Activated B cell treated with CpG ODN at 0.5 μM for 24 hours (primary cell): ENCODE measurements at regions of chr12 and their contacts with region 1.

Region 1: GRCh38 chr12:42482445-42483237 is 106.9 kb downstream of the PRICKLE1 start:
- DNase-seq: peak; percentile 89
- ATAC-seq: peak; percentile 76
- H3K4me3 Mint-ChIP-seq: peak overlapping the region; percentile 94
- H3K27ac Mint-ChIP-seq: peak overlapping the region; percentile 86
- H3K4me1 Mint-ChIP-seq: peaks cover 58% of the 10 kb centered on the region
- H3K27me3 Mint-ChIP-seq: no peaks in the 10 kb centered on the region
- CTCF ChIP-seq: no peak

Region 2: DNA sequence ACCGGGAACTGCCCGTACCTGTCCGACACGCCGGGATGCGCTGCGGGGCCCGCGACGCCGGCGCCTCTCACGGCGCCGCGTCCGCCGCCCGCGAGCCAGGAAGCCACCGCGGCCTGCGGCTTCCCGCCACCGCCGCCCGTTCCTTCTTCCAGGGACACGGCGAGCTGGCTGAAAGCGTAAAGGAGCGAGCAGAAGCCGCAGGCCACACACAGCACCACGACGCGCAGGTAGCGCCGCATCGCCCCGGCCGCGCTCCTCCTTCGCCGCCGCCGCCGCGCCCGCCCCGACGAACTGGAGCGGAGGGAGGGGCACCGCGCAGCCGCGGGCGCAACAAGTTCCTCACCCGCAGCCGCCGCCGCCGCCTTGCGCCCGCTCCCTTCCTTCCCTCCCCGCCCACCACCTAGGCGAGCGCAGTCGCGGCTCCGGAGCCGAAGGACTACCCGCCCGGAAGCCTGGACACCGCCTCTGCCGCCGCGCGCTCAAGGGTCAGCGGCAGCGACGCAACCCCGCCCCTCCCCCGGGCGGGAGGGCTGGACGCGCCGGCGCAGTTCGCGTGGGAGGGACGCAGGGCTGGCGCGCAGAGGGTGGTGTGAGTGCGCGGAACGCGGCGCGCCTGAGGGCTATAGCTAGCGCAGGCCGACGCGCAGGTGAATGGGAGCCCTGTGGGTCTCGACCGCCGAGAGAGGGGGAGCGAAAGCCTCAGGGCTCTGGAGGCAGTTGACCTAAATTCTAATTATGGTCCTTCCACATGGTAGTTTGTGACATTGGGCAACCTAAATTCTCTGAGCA is 338.0 kb before region 1 on chr12 and contains the start of gene GXYLT1:
- CTCF ChIA-PET with region 1: no interaction called
- POLR2A ChIA-PET with region 1: no interaction called
- intact Hi-C with region 1: loop called (anchors 5 kb)
- DNase-seq: peak; percentile 87
- ATAC-seq: peak; percentile 94
- H3K4me3 Mint-ChIP-seq: peak within 1 kb of the TSS; percentile 95
- H3K27ac Mint-ChIP-seq: peak within 1 kb of the TSS; percentile 83
- H3K4me1 Mint-ChIP-seq: peaks cover 40% of the 10 kb centered on the region
- H3K27me3 Mint-ChIP-seq: no peaks in the 10 kb centered on the region
- CTCF ChIP-seq: no peak
- total RNA-seq, gene GXYLT1: 6.9 and 7.9 TPM in 2 replicates

Region 3: DNA sequence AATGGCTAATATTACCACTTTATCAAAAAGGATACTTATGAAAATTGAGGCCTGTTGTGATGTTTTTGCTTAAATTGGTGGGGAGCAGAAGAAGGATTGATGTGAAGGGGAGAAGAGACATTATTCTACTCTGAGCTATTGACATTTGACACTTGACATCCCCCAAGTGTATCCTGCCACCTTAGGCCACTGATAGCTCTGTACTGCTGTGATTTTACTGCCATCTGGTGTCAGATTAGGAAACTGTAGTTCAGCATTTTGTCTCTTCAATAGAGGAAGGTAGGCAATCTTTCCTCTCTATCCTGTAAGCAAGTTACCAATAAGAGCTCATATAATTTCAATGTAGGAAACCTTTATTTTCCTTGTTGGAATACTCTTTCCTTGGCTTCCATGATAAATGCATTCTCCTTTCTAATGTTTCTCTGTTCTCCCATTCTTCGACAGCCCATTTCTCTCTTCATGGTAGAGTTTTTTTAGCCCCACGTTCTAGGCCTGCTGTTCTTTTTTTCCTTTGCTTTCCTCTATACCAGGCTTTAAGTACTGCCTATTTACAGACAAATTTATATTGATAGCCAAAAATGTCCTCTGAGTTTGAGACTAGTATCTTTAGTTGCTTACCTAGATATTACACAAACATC is 110.4 kb before region 1 on chr12:
- CTCF ChIA-PET with region 1: interaction called, 11 read pairs
- POLR2A ChIA-PET with region 1: interaction called, 5 read pairs
- intact Hi-C with region 1: loop called (anchors 2 kb)
- DNase-seq: no peak
- ATAC-seq: peak; percentile 94
- H3K4me3 Mint-ChIP-seq: no peak overlapping the region
- H3K27ac Mint-ChIP-seq: no peak overlapping the region
- H3K4me1 Mint-ChIP-seq: peaks cover 16% of the 10 kb centered on the region
- H3K27me3 Mint-ChIP-seq: no peaks in the 10 kb centered on the region
- CTCF ChIP-seq: peak; percentile 30

Region 4: GRCh38 chr12:42469355-42470175 is 13.1 kb before region 1 on chr12:
- CTCF ChIA-PET with region 1: interaction called, 45 read pairs
- POLR2A ChIA-PET with region 1: interaction called, 50 read pairs
- intact Hi-C with region 1: loop called (anchors 1 kb)
- DNase-seq: peak; percentile 37
- ATAC-seq: peak; percentile 94
- H3K4me3 Mint-ChIP-seq: peak overlapping the region; percentile 87
- H3K27ac Mint-ChIP-seq: peak overlapping the region; percentile 97
- H3K4me1 Mint-ChIP-seq: peaks cover 76% of the 10 kb centered on the region
- H3K27me3 Mint-ChIP-seq: no peaks in the 10 kb centered on the region
- CTCF ChIP-seq: no peak

Region 5: DNA sequence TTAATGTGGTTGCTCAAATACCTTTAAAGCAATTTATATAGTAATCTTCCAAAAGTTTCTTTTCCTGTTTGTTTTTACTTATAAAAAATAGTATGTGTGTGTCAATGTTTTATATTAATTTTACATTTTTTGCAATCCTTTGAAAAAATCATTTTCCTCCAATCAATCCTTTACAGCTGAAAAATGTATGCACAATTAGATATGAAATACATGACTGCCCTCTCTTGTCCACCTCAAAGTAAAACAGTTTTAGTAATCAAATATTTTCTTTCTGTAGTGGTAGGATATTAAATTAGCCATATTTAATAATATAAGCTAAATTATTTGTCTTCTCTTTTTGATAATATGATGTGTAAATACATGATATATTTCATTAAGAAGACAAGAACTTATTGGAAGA is 799.5 kb after region 1 on chr12:
- CTCF ChIA-PET with region 1: interaction called, 6 read pairs
- POLR2A ChIA-PET with region 1: interaction called, 3 read pairs
- intact Hi-C with region 1: loop called (anchors 1 kb)
- DNase-seq: no peak
- ATAC-seq: no peak
- H3K4me3 Mint-ChIP-seq: no peak overlapping the region
- H3K27ac Mint-ChIP-seq: no peak overlapping the region
- H3K4me1 Mint-ChIP-seq: peaks cover 16% of the 10 kb centered on the region
- H3K27me3 Mint-ChIP-seq: no peaks in the 10 kb centered on the region
- CTCF ChIP-seq: no peak

Region 6: DNA sequence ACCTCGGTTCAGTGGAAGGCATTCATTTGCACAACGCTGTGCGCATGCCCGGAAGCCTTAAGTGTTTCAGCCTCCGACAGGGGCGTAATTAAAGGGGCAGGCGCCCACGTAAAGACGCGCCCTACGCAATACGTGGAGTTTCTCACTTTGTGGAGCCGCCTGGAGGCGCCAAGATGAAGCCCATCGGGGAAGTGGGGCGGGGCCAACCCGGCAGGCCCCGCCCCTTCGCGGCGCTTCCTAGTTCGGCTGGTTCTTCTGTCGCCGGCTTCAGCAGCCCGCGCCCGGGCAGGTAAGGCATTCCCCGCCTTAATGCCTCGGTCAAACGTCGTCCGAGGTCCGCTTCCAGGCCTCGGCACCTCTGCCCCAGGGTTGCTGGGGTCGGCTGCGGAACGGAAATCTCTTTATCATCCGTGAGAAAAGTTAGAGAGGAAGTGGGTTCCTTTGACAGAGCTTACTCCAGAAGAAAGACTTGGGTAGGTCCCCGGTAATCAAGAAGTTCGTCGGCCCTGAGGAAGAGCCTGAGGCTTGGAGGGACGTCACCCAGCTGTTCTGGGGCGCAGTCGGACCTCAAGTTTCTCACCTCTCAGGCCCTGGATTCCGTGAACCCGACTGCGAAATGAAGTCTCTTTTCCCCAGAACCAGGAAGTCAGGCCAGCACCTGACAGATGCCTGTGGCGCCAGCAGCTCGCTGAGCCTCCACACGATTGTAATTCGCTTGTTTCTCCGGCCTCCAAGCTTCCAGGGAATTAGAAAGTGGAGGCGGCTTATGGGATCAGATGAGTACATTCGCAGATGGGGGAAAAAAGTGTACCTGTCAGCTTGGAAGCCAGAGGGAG is 1276.3 kb after region 1 on chr12 and contains the starts of genes IRAK4 and PUS7L:
- CTCF ChIA-PET with region 1: no interaction called
- POLR2A ChIA-PET with region 1: interaction called, 4 read pairs
- intact Hi-C with region 1: loop called (anchors 5 kb)
- DNase-seq: peak; percentile 83
- ATAC-seq: peak; percentile 98
- H3K4me3 Mint-ChIP-seq: peak within 1 kb of the TSS; percentile 98
- H3K27ac Mint-ChIP-seq: peak within 1 kb of the TSS; percentile 97
- H3K4me1 Mint-ChIP-seq: peaks cover 68% of the 10 kb centered on the region
- H3K27me3 Mint-ChIP-seq: no peaks in the 10 kb centered on the region
- CTCF ChIP-seq: no peak
- total RNA-seq, gene IRAK4: 38.4 and 40.8 TPM in 2 replicates
- total RNA-seq, gene PUS7L: 16.1 and 19.9 TPM in 2 replicates